Kidney (tissue), 22 donors: ENCODE measurements at regions of chr12 and their contacts with region 1.

Region 1: GRCh38 chr12:96237465-96238077 is 43.4 kb downstream of the ELK3 start:
- DNase-seq: no peak
- H3K4me3 ChIP-seq: no peak overlapping the region
- H3K27ac ChIP-seq: peak overlapping the region; percentile 13 to 40
- H3K4me1 ChIP-seq: peaks cover 0 to 13% (median 0%) of the 10 kb centered on the region in 3 donors
- H3K27me3 ChIP-seq: no peaks in the 10 kb centered on the region
- CTCF ChIP-seq: no peak

Region 2: DNA sequence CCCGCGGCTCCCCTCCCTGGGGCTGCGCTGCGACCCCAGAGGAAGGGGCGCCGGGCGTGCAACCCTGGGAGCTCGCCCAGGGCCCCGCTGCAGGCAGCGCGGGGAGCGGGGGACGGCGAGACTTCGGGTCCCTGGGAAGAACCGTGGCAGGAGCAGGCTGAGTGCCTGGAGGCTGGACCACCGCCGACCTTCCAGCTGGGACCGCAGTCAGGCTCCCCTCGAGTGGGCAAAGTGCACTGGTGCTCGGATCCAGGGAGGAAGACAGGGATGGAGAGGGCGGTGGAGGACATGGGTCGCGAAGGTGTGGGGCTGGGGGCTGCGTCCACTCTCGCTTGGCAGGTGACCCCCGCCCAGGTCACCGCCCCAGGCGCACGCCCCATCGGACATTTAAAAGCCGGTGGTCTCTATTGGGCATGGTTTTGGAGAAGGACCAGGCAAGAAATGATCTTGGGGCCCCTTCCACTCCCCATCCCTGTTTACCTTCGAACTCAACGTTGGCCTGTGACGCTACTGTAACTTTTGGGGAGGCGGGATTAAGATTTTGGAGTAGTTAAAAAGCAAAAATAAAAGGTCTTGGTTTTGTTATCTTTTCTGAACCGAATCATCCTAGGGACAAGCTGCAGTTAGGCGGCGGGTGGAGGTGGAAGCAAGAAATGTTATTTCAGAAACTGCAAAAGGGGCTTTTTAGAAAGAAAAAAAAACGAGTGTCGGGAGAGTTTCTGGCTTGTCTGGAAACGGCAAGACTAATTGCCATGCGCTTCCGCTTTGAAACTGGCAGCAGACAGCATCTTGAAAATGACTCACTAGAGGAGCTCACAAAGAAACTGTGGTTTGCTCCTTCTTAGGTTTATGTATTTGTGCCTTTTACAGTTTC is 42.4 kb before region 1 on chr12:
- intact Hi-C with region 1: no loop called
- DNase-seq: peak; percentile 50 to 83 (median 71)
- H3K4me3 ChIP-seq: peak overlapping the region; percentile 70 to 78 (median 77)
- H3K27ac ChIP-seq: peak overlapping the region; percentile 74 to 78
- H3K4me1 ChIP-seq: no peaks in the 10 kb centered on the region
- H3K27me3 ChIP-seq: no peaks in the 10 kb centered on the region
- CTCF ChIP-seq: no peak

Region 3: DNA sequence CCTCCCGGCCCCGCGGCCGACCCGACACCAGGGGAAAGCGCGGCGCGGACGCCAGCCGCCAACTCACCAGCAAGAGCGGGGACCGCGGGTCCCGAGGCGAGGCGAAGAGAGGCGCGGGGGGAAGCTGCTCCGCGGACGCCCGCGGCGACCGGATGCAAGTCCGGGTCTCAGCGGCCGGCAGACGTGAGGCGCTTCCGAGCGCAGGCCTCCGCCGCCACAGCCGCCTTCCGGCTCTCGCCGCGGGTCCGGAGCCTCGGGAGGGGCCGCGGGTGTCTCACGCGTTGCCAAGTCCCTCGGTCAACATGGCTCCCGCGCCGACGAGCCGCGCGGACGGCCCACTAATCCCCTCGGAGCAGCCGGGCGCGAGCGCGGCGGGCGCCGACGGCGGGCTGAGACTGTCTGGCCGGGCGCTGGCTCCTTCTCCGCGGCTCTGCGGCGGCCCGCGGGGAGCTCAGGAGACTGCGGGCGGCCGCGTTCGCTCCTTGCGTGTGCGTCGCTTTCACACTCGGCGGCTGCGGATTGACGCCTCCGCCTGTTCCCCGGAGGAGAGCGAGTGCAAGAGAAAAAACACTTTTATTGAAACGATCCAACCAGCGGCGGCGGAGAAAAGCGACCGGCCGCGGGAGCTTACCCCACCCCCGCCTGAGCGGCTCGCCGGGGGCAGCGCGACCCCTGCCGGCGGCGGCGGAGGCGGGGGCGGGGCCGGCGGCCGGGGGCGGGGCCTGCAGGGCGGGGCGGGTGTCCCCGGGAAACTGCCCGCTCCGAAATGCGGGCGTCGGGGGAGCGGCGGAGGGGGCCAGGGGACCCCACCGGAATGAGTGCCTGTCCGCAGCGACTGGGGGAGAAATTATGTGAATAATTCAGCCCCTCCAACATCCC is 162.6 kb after region 1 on chr12 and contains the start of gene CDK17:
- intact Hi-C with region 1: loop called (anchors 10 kb)
- DNase-seq: peak; percentile 90 to 95 (median 94)
- H3K4me3 ChIP-seq: peak within 1 kb of the TSS; percentile 90 to 98 (median 93)
- H3K27ac ChIP-seq: peak within 1 kb of the TSS; percentile 93 to 97
- H3K4me1 ChIP-seq: peaks cover 2 to 7% (median 2%) of the 10 kb centered on the region in 3 donors
- H3K27me3 ChIP-seq: no peaks in the 10 kb centered on the region
- CTCF ChIP-seq: peak; percentile 41
- total RNA-seq, gene CDK17: 35.7 TPM